Activated CD4-positive, alpha-beta memory T cell treated with anti-CD3 and anti-CD28 coated beads for 36 hours (primary cell): ENCODE measurements at regions of chr1 and their contacts with region 1.

Region 1: DNA sequence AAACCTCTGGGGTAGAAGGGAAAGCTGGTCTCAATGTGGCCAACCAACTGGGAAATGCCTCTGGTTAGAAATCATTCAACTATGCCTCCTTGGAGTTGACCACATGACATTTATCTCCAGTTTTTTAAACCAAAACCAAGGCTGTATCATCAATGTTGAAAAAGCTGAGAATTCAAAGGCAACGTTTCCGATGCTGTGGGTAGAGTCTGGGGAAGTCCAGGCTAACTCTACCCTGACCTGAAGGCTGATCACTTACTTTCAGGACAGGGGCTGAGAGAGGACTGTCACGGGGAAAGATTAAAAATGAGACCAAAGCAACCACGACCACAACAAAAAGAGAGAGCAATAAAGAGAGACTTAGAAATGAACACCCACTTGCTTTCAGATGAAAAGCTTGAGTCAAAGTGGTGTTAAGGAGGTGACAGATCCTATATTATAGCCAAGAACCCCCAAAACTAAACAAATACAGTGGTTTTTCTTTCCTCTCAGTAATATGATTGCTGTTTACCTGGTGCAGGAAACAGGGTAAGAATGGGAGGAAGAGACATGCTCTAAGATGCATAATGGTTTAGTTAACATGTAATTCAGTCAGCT is 90.8 kb upstream of the TNFSF4 start:
- DNase-seq: peak; percentile 69
- H3K4me3 Mint-ChIP-seq: no peak overlapping the region
- H3K27ac Mint-ChIP-seq: no peak overlapping the region
- H3K4me1 Mint-ChIP-seq: peaks cover 39% of the 10 kb centered on the region
- H3K27me3 Mint-ChIP-seq: peaks cover 1% of the 10 kb centered on the region

Region 2: GRCh38 chr1:172671591-172671990 is 626.3 kb before region 1 on chr1:
- CTCF ChIA-PET with region 1: no interaction called
- POLR2A ChIA-PET with region 1: no interaction called
- intact Hi-C with region 1: loop called (anchors 2 kb)
- DNase-seq: no peak
- H3K4me3 Mint-ChIP-seq: no peak overlapping the region
- H3K27ac Mint-ChIP-seq: no peak overlapping the region
- H3K4me1 Mint-ChIP-seq: peaks cover 77% of the 10 kb centered on the region
- H3K27me3 Mint-ChIP-seq: no peaks in the 10 kb centered on the region

Region 3: GRCh38 chr1:172883107-172883791 is 414.6 kb before region 1 on chr1:
- CTCF ChIA-PET with region 1: no interaction called
- POLR2A ChIA-PET with region 1: no interaction called
- intact Hi-C with region 1: loop called (anchors 5 kb)
- DNase-seq: peak; percentile 48
- H3K4me3 Mint-ChIP-seq: no peak overlapping the region
- H3K27ac Mint-ChIP-seq: no peak overlapping the region
- H3K4me1 Mint-ChIP-seq: peaks cover 15% of the 10 kb centered on the region
- H3K27me3 Mint-ChIP-seq: peaks cover 33% of the 10 kb centered on the region

Region 4: DNA sequence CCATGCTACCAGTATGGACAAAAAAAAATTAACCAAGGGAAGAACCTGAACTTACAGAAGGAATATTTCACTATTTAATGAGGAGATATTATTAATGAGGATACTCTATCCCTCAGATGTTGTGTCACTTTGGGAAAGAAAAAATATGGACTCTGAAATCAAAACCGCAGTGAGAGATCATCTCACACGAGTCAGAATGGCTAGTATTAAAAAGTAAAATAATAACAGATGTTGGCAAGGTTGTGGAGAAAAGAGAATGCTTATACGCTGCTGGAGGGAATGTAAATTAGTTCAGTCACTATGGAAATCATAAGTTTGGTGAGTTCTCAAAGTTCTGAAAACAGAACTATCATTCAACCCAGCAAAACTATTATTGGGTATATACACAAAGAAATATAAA is 121.6 kb before region 1 on chr1:
- CTCF ChIA-PET with region 1: no interaction called
- POLR2A ChIA-PET with region 1: no interaction called
- intact Hi-C with region 1: no loop called
- DNase-seq: no peak
- H3K4me3 Mint-ChIP-seq: no peak overlapping the region
- H3K27ac Mint-ChIP-seq: no peak overlapping the region
- H3K4me1 Mint-ChIP-seq: no peaks in the 10 kb centered on the region
- H3K27me3 Mint-ChIP-seq: no peaks in the 10 kb centered on the region

Region 5: GRCh38 chr1:173224280-173224892 is 73.5 kb before region 1 on chr1:
- CTCF ChIA-PET with region 1: no interaction called
- POLR2A ChIA-PET with region 1: no interaction called
- intact Hi-C with region 1: loop called (anchors 5 kb)
- DNase-seq: no peak
- H3K4me3 Mint-ChIP-seq: no peak overlapping the region
- H3K27ac Mint-ChIP-seq: no peak overlapping the region
- H3K4me1 Mint-ChIP-seq: peaks cover 8% of the 10 kb centered on the region
- H3K27me3 Mint-ChIP-seq: no peaks in the 10 kb centered on the region

Region 6: DNA sequence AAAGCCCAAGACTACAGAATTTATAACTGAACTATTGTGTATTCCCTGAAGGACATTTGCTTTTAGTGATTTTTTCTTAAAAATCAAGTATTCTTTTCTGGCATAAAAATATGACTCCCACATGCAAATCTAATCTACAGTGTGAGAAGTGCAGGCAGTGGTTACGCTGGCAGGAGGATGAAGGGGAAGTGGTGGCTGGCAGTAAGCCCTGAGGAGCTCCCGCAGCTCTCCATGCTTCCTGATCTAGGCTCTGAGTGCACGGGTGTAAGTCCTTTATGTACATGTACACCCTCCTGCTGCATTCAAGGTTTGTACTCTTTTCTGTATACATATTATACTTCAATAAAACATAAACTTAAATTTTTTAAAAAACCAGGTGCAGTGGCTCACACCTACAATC is 111.7 kb after region 1 on chr1:
- CTCF ChIA-PET with region 1: no interaction called
- POLR2A ChIA-PET with region 1: no interaction called
- intact Hi-C with region 1: loop called (anchors 5 kb)
- DNase-seq: peak; percentile 23
- H3K4me3 Mint-ChIP-seq: no peak overlapping the region
- H3K27ac Mint-ChIP-seq: no peak overlapping the region
- H3K4me1 Mint-ChIP-seq: peaks cover 26% of the 10 kb centered on the region
- H3K27me3 Mint-ChIP-seq: no peaks in the 10 kb centered on the region